Gastrocnemius medialis (tissue), 4 donors: ENCODE measurements at regions of chr1 and their contacts with region 1.

Region 1: GRCh38 chr1:16904560-16905111 is 8.9 kb downstream of the RNU1-2 start:
- DNase-seq: peak; percentile 100
- ATAC-seq: peak; percentile 96 to 98
- H3K4me3 ChIP-seq: peak overlapping the region; percentile 64 to 79 (median 69)
- H3K27ac ChIP-seq: peak overlapping the region; percentile 88 to 98 (median 93)
- H3K4me1 ChIP-seq: peaks cover 13 to 16% of the 10 kb centered on the region in 2 donors
- H3K27me3 ChIP-seq: no peaks in the 10 kb centered on the region
- CTCF ChIP-seq: no peak
- POLR2A ChIP-seq: no peak

Region 2: GRCh38 chr1:16498573-16499413 is 405.8 kb before region 1 on chr1:
- in situ Hi-C with region 1: no loop called
- intact Hi-C with region 1: loop called (anchors 10 kb)
- DNase-seq: peak; percentile 67 to 76
- ATAC-seq: peak; percentile 88 to 90
- H3K4me3 ChIP-seq: peak overlapping the region; percentile 67 to 89 (median 82)
- H3K27ac ChIP-seq: peak overlapping the region; percentile 65 to 84 (median 78)
- H3K4me1 ChIP-seq: peaks cover 0 to 9% of the 10 kb centered on the region in 2 donors
- H3K27me3 ChIP-seq: no peaks in the 10 kb centered on the region
- CTCF ChIP-seq: peak in 2 of 5 experiments; percentile 11 to 25
- POLR2A ChIP-seq: peak in 1 of 2 donors; percentile 23

Region 3: DNA sequence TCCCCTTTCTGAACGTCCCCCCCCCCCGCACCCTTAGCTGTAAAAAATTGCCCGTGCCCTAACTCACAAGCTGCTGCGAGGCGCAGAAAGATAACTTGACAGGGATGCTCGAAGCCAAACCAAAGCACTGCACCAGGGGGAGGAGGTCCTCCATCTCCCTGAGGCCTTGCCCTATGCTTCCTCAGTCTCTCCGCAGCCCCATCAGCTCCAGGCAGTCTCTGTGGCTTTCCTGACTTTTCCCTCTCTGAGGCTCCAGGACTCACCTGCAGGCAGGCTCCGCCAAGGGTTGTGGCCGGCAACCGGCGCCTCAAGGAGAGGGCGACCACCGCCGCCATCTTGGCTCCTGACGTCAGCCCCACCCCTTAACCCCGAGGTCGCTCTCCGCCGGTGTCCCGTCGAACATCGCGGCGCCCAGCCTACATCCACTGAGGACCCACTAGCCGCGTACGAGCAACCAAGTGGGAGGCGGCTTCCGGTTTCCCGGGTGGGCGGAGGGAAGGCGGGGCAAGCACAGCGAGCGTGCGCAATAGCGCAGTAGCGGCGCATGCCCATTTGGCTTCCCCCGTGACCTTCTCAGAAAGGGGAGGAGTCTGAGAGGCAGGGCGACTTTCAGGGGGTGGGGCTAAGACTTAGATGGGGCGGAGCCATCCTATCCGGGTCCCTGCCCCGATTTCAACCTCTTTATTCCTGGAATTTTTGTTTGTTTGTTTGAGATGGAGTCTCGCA is 149.2 kb after region 1 on chr1 and contains the start of gene SDHB:
- in situ Hi-C with region 1: no loop called
- intact Hi-C with region 1: loop called (anchors 5 kb)
- DNase-seq: peak; percentile 98
- ATAC-seq: peak; percentile 95 to 97
- H3K4me3 ChIP-seq: peak within 1 kb of the TSS; percentile 92 to 97 (median 94)
- H3K27ac ChIP-seq: peak within 1 kb of the TSS; percentile 96 to 97 (median 96)
- H3K4me1 ChIP-seq: peaks cover 23 to 24% of the 10 kb centered on the region in 2 donors
- H3K27me3 ChIP-seq: no peaks in the 10 kb centered on the region
- CTCF ChIP-seq: no peak
- POLR2A ChIP-seq: peak; percentile 95 to 97
- total RNA-seq, gene SDHB: 238 to 405 (median 328) TPM

Region 4: GRCh38 chr1:17098446-17099251 is 194.0 kb after region 1 on chr1:
- in situ Hi-C with region 1: no loop called
- intact Hi-C with region 1: no loop called
- DNase-seq: peak; percentile 98 to 100
- ATAC-seq: peak; percentile 76 to 84
- H3K4me3 ChIP-seq: no peak overlapping the region
- H3K27ac ChIP-seq: peak overlapping the region; percentile 89 to 97 (median 96)
- H3K4me1 ChIP-seq: peaks cover 55 to 88% of the 10 kb centered on the region in 2 donors
- H3K27me3 ChIP-seq: no peaks in the 10 kb centered on the region
- CTCF ChIP-seq: no peak
- POLR2A ChIP-seq: peak in 1 of 2 donors; percentile 17